Calu3 (cell line): ENCODE measurements at regions of chr1 and their contacts with region 1.

Region 1: GRCh38 chr1:172532700-172533509 is at the start of gene SUCO:
- DNase-seq: peak; percentile 100
- H3K4me3 Mint-ChIP-seq: peak within 1 kb of the TSS; percentile 85
- H3K27ac Mint-ChIP-seq: peak within 1 kb of the TSS; percentile 99
- H3K4me1 Mint-ChIP-seq: peaks cover 41% of the 10 kb centered on the region
- H3K27me3 Mint-ChIP-seq: no peaks in the 10 kb centered on the region
- CTCF ChIP-seq: no peak
- total RNA-seq, gene SUCO: 65.3 and 84.6 TPM in 2 replicates

Region 2: GRCh38 chr1:172484233-172484632 is 48.7 kb before region 1 on chr1:
- CTCF ChIA-PET with region 1: no interaction called
- intact Hi-C with region 1: loop called (anchors 5 kb)
- DNase-seq: no peak
- H3K4me3 Mint-ChIP-seq: no peak overlapping the region
- H3K27ac Mint-ChIP-seq: no peak overlapping the region
- H3K4me1 Mint-ChIP-seq: peaks cover 32% of the 10 kb centered on the region
- H3K27me3 Mint-ChIP-seq: no peaks in the 10 kb centered on the region
- CTCF ChIP-seq: no peak

Region 3: GRCh38 chr1:172719694-172720138 is 186.8 kb after region 1 on chr1:
- CTCF ChIA-PET with region 1: no interaction called
- intact Hi-C with region 1: loop called (anchors 5 kb)
- DNase-seq: peak; percentile 35
- H3K4me3 Mint-ChIP-seq: no peak overlapping the region
- H3K27ac Mint-ChIP-seq: no peak overlapping the region
- H3K4me1 Mint-ChIP-seq: peaks cover 46% of the 10 kb centered on the region
- H3K27me3 Mint-ChIP-seq: no peaks in the 10 kb centered on the region
- CTCF ChIP-seq: peak; percentile 86

Region 4: GRCh38 chr1:172993462-172994039 is 460.6 kb after region 1 on chr1:
- CTCF ChIA-PET with region 1: no interaction called
- intact Hi-C with region 1: no loop called
- DNase-seq: no peak
- H3K4me3 Mint-ChIP-seq: no peak overlapping the region
- H3K27ac Mint-ChIP-seq: no peak overlapping the region
- H3K4me1 Mint-ChIP-seq: peaks cover 10% of the 10 kb centered on the region
- H3K27me3 Mint-ChIP-seq: no peaks in the 10 kb centered on the region
- CTCF ChIP-seq: no peak